ENCODE measurements at regions of chr9 and their contacts with region 1.

Region 1: DNA sequence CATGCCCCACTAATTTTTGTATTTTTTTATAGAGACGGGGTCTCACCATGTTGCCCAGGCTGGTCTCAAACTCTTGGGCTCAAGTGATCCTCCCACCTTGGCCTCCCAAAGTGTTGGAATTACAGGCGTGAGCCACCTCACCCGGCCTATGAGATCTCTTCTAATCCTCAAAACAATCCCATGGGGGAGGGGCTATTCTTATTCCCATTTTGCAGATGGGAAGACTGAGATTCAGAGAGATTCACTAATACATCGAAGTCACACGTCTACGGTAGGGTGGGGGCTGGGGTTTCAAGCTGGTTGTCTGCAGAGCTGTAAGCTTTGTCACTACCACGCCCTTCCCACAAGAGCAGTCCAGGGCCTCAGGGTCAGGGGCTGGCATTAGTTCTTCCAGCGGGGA is 14.0 kb upstream of the NTNG2 start:
- DNase-seq: no peak
- ATAC-seq: no peak
- H3K4me3 ChIP-seq: no peak overlapping the region
- H3K27ac ChIP-seq: no peak overlapping the region
- H3K4me1 ChIP-seq: no peaks in the 10 kb centered on the region
- H3K27me3 ChIP-seq: peaks cover 75% of the 10 kb centered on the region
- CTCF ChIP-seq: no peak
- POLR2A ChIP-seq: no peak
- RAD21 ChIP-seq: no peak

Region 2: GRCh38 chr9:132128161-132128560 is 19.7 kb before region 1 on chr9:
- CTCF ChIA-PET with region 1: no interaction called
- POLR2A ChIA-PET with region 1: no interaction called
- dilution Hi-C with region 1: no loop called
- in situ Hi-C with region 1: no loop called
- intact Hi-C with region 1: loop called (anchors 2 kb)
- DNase-seq: no peak
- ATAC-seq: no peak
- H3K4me3 ChIP-seq: no peak overlapping the region
- H3K27ac ChIP-seq: no peak overlapping the region
- H3K4me1 ChIP-seq: no peaks in the 10 kb centered on the region
- H3K27me3 ChIP-seq: peaks cover 76% of the 10 kb centered on the region
- CTCF ChIP-seq: no peak
- POLR2A ChIP-seq: no peak
- RAD21 ChIP-seq: no peak

Region 3: GRCh38 chr9:132472199-132472598 is 324.4 kb after region 1 on chr9:
- CTCF ChIA-PET with region 1: no interaction called
- POLR2A ChIA-PET with region 1: no interaction called
- dilution Hi-C with region 1: no loop called
- in situ Hi-C with region 1: no loop called
- intact Hi-C with region 1: no loop called
- DNase-seq: no peak
- ATAC-seq: no peak
- H3K4me3 ChIP-seq: no peak overlapping the region
- H3K27ac ChIP-seq: no peak overlapping the region
- H3K4me1 ChIP-seq: no peaks in the 10 kb centered on the region
- H3K27me3 ChIP-seq: peaks cover 30% of the 10 kb centered on the region
- CTCF ChIP-seq: no peak
- POLR2A ChIP-seq: no peak
- RAD21 ChIP-seq: no peak